CD4-positive, alpha-beta T cell (primary cell): ENCODE measurements at regions of chr11 and their contacts with region 1.

Region 1: DNA sequence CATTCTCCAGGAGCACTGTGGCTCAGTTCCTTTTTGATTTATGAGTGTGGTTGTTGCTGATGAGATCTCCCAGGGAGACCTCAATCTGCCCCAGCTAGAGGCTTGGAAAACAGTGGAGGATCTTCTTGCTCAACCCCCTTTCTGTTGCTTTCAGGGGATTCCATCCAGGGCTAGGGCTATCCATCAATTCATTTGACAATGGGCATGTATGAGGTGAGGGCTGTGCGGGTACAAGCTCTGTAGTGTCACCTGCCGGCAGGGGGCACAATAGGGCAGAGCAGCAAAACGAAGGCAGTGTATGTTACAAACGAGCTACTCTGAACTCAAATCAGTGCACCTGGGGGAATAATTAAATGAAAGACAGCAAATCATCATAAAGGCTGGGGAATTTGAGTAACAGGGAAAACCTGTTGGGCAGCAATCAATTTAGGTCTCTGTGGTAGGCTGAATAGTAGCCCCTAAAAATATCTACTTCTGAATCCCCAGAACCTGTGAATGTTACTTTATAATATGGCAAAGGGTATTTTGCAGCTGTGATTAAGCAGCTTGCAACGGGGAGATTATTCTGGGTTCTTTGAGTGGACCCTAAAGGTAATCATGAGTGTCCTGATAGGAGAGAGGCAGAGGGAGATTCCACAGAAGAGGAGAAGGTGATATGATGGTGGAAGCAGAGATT is 170.3 kb upstream of the ZBED5 start:
- DNase-seq: peak; percentile 70 to 90 (median 78)
- ATAC-seq: peak; percentile 99
- H3K4me3 ChIP-seq: no peak overlapping the region
- H3K4me3 Mint-ChIP-seq: no peak overlapping the region
- H3K27ac ChIP-seq: no peak overlapping the region
- H3K27ac Mint-ChIP-seq: no peak overlapping the region
- H3K4me1 ChIP-seq: no peaks in the 10 kb centered on the region
- H3K4me1 Mint-ChIP-seq: no peaks in the 10 kb centered on the region
- H3K27me3 ChIP-seq: no peaks in the 10 kb centered on the region
- H3K27me3 Mint-ChIP-seq: no peaks in the 10 kb centered on the region
- CTCF ChIP-seq: peak; percentile 86

Region 2: GRCh38 chr11:11148104-11148509 is 120.0 kb after region 1 on chr11:
- CTCF ChIA-PET with region 1: interaction called, 18 read pairs
- POLR2A ChIA-PET with region 1: interaction called, 5 read pairs
- intact Hi-C with region 1: no loop called
- DNase-seq: peak in 13 of 14 experiments; percentile 27 to 73 (median 48)
- ATAC-seq: peak; percentile 13
- H3K4me3 ChIP-seq: no peak overlapping the region
- H3K4me3 Mint-ChIP-seq: peak overlapping the region; percentile 63
- H3K27ac ChIP-seq: peak overlapping the region in 1 of 2 donors; percentile 95
- H3K27ac Mint-ChIP-seq: peak overlapping the region; percentile 95
- H3K4me1 ChIP-seq: peaks cover 45% of the 10 kb centered on the region
- H3K4me1 Mint-ChIP-seq: peaks cover 74% of the 10 kb centered on the region
- H3K27me3 ChIP-seq: no peaks in the 10 kb centered on the region
- H3K27me3 Mint-ChIP-seq: no peaks in the 10 kb centered on the region
- CTCF ChIP-seq: no peak

Region 3: DNA sequence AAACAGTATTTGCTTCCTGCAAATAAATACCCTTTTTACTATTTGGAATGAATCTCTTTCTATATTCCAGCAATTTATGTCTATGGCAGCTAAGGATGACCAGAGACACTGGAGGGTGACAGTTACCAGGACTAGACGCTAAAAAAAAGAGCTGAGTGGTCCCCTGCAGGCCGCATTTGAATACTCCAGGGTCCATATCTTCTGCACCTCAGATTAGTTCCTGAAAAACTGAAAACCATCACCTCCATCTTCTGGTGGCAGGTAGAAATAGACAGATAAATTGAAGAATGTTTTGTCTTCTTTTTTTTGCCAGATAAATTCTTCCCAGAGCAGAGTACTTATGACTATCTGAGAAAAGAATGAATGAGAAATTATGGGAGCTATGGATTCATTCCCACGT is 179.3 kb after region 1 on chr11:
- CTCF ChIA-PET with region 1: interaction called, 6 read pairs
- POLR2A ChIA-PET with region 1: no interaction called
- intact Hi-C with region 1: loop called in 1 of 2 experiments (anchors 1 kb)
- DNase-seq: peak in 2 of 14 experiments; percentile 15 to 45
- ATAC-seq: no peak
- H3K4me3 ChIP-seq: no peak overlapping the region
- H3K4me3 Mint-ChIP-seq: no peak overlapping the region
- H3K27ac ChIP-seq: no peak overlapping the region
- H3K27ac Mint-ChIP-seq: no peak overlapping the region
- H3K4me1 ChIP-seq: no peaks in the 10 kb centered on the region
- H3K4me1 Mint-ChIP-seq: no peaks in the 10 kb centered on the region
- H3K27me3 ChIP-seq: no peaks in the 10 kb centered on the region
- H3K27me3 Mint-ChIP-seq: peaks cover 44% of the 10 kb centered on the region
- CTCF ChIP-seq: no peak

Region 4: GRCh38 chr11:11787305-11788062 is 759.3 kb after region 1 on chr11:
- CTCF ChIA-PET with region 1: interaction called, 32 read pairs
- POLR2A ChIA-PET with region 1: no interaction called
- intact Hi-C with region 1: loop called (anchors 1 kb)
- DNase-seq: peak; percentile 54 to 83 (median 65)
- ATAC-seq: peak; percentile 88
- H3K4me3 ChIP-seq: no peak overlapping the region
- H3K4me3 Mint-ChIP-seq: no peak overlapping the region
- H3K27ac ChIP-seq: no peak overlapping the region
- H3K27ac Mint-ChIP-seq: no peak overlapping the region
- H3K4me1 ChIP-seq: no peaks in the 10 kb centered on the region
- H3K4me1 Mint-ChIP-seq: no peaks in the 10 kb centered on the region
- H3K27me3 ChIP-seq: no peaks in the 10 kb centered on the region
- H3K27me3 Mint-ChIP-seq: peaks cover 6% of the 10 kb centered on the region
- CTCF ChIP-seq: peak; percentile 92

Region 5: GRCh38 chr11:12043959-12044819 is 1016.0 kb after region 1 on chr11:
- CTCF ChIA-PET with region 1: no interaction called
- POLR2A ChIA-PET with region 1: no interaction called
- intact Hi-C with region 1: loop called (anchors 10 kb)
- DNase-seq: peak; percentile 31 to 81 (median 48)
- ATAC-seq: peak; percentile 64
- H3K4me3 ChIP-seq: no peak overlapping the region
- H3K4me3 Mint-ChIP-seq: no peak overlapping the region
- H3K27ac ChIP-seq: no peak overlapping the region
- H3K27ac Mint-ChIP-seq: no peak overlapping the region
- H3K4me1 ChIP-seq: peaks cover 8% of the 10 kb centered on the region
- H3K4me1 Mint-ChIP-seq: peaks cover 4% of the 10 kb centered on the region
- H3K27me3 ChIP-seq: no peaks in the 10 kb centered on the region
- H3K27me3 Mint-ChIP-seq: no peaks in the 10 kb centered on the region
- CTCF ChIP-seq: peak; percentile 98